GM23248 (cell line): ENCODE measurements at regions of chr1 and their contacts with region 1.

Region 1: DNA sequence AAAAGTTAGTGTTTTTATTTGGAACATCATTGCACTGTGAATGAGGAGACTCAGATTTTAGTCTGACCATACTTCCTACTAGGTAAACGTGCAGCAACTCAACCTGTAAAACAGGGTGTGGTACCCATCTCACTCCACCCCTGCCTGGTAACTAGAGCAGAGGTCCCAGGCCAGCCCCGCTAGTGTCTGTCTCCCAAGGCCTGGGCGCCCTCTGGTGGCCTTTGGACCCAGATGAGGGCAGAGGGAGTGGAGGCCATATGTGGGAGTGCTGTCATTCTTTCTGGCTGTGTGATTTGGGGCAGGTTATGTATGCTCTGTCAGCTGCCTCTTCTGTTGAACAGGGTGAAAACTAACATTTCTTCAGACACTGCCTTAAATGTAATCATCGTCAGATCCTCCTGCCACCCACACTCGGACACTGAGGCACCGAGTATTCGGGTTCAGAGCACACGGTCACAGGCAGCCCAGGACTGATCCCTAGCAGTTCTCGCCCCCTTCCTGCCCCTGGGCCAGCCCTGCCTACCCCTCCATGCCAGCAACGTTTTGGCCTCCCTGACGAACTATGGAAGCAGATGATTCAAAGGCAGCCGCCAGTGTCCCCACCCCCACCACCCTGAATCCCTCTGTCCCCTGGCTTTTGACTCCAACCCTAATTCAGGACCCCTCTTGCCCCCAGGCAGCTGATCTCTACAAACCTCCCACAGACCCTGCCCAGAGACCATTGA is 76.0 kb downstream of the CD247 start:
- DNase-seq: peak; percentile 87
- H3K4me3 ChIP-seq: no peak overlapping the region
- H3K27ac ChIP-seq: no peak overlapping the region
- H3K4me1 ChIP-seq: no peaks in the 10 kb centered on the region
- H3K27me3 ChIP-seq: no peaks in the 10 kb centered on the region; the same call in none of the 2 replicates

Region 2: DNA sequence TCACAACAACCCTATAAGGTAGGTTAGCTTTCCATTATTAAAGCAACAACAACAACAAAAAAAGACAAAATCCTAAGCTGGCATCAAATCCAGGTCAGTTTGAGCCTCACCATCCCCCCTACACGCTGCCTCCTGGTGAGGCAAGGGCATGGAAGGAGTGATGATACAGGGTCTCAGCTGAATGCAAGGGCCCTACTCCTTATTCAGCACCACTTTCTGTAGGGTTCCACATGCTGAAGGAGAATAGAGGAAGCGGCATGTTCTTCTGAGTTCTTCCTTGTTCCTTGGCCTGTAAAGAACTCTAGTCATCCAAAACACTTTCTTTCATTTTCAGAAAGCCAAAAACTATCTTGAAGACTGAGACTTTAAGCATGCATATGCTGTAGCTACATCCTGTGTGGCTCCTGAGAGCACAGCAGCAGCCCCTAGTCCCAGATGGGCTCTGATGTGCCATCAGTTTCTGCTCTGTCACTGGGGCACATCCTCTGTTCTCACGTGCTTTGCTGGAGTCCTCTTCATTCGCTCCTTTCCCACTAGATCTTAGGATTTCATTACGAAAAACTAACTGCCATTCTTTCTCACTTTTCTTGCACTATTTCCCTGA is 473.1 kb before region 1 on chr1:
- in situ Hi-C with region 1: no loop called
- DNase-seq: no peak
- H3K4me3 ChIP-seq: no peak overlapping the region
- H3K27ac ChIP-seq: no peak overlapping the region
- H3K4me1 ChIP-seq: no peaks in the 10 kb centered on the region
- H3K27me3 ChIP-seq: peaks cover 53% of the 10 kb centered on the region

Region 3: DNA sequence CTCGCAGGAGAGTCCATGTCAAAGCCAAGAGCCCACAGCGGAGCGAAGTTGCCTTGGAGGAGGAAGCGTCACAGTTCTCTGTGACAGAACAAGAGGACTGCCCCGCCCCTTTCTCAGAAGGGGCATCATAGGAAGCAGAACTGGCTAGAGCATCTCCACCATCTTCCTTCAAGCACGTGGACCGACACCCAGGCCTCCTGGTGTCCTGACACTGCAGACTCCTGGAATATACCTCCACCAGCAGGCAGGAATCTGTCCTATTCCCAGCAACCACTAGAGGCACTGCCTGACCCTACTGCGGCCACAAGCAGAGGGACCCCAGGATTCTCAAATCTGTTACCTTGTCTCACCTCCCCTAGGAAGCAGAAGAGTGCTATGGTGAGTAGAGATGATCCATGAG is 389.9 kb before region 1 on chr1:
- in situ Hi-C with region 1: no loop called
- DNase-seq: peak; percentile 28
- H3K4me3 ChIP-seq: no peak overlapping the region
- H3K27ac ChIP-seq: no peak overlapping the region
- H3K4me1 ChIP-seq: no peaks in the 10 kb centered on the region
- H3K27me3 ChIP-seq: no peaks in the 10 kb centered on the region; the same call in 1 of the 2 replicates

Region 4: GRCh38 chr1:167066333-167067122 is 375.8 kb before region 1 on chr1:
- in situ Hi-C with region 1: loop called (anchors 10 kb)
- DNase-seq: peak; percentile 66
- H3K4me3 ChIP-seq: peak overlapping the region; percentile 52
- H3K27ac ChIP-seq: no peak overlapping the region
- H3K4me1 ChIP-seq: no peaks in the 10 kb centered on the region
- H3K27me3 ChIP-seq: peaks cover 3% of the 10 kb centered on the region; the same call in 1 of the 2 replicates

Region 5: GRCh38 chr1:167263819-167264464 is 178.3 kb before region 1 on chr1:
- in situ Hi-C with region 1: loop called (anchors 10 kb)
- DNase-seq: no peak
- H3K4me3 ChIP-seq: no peak overlapping the region
- H3K27ac ChIP-seq: no peak overlapping the region
- H3K4me1 ChIP-seq: 0 out of 2 replicates have a peak, but pooled peaks cover 9% of the 10 kb centered on the region
- H3K27me3 ChIP-seq: no peaks in the 10 kb centered on the region

Region 6: GRCh38 chr1:167964646-167965045 is 522.4 kb after region 1 on chr1:
- in situ Hi-C with region 1: no loop called
- DNase-seq: no peak
- H3K4me3 ChIP-seq: no peak overlapping the region
- H3K27ac ChIP-seq: no peak overlapping the region
- H3K4me1 ChIP-seq: peaks cover 10% of the 10 kb centered on the region
- H3K27me3 ChIP-seq: no peaks in the 10 kb centered on the region